GM18951 (cell line): ENCODE measurements at regions of chr6 and their contacts with region 1.

Region 1: DNA sequence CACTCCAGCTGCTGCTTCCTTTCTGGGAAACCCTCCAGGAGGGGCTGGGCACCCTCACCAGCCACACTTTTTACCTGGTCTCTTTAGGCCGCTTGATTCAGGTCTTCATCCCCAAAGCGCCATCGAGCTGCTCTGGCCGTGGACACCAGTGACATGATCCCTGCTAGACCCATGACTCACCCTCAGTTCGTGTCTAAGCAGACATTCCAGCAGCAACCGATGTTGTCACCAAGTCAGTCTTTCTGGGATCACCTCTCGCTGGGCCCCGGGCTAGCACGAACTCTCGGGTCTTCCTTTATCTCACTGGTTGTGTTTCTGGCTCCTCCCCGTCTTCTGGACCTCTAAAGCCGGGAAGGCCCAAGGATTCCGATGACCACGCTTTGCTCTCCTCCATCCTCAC is 43.0 kb upstream of the GPR31 start:
- POLR2A ChIP-seq: no peak

Region 2: DNA sequence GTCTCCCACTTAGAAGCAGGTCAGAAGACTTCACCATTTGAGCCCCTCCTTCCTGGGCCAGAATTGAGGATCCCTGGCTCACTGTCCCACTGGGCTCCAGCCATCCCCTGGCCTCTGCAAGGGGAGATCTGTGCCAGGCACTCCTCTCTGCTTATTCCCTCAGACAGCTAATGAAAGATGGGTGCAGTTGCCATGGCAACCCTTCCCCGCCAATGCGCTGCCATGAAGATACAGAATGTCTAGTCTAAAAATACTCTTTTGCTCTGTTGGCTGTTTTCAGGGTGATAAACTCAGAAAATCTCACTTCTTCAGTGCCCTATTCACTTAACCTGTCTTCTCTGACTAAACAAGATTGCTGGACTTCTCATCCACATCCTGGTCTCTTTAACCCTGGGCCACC is 110.5 kb after region 1 on chr6:
- in situ Hi-C with region 1: loop called (anchors 10 kb)
- POLR2A ChIP-seq: no peak

Region 3: DNA sequence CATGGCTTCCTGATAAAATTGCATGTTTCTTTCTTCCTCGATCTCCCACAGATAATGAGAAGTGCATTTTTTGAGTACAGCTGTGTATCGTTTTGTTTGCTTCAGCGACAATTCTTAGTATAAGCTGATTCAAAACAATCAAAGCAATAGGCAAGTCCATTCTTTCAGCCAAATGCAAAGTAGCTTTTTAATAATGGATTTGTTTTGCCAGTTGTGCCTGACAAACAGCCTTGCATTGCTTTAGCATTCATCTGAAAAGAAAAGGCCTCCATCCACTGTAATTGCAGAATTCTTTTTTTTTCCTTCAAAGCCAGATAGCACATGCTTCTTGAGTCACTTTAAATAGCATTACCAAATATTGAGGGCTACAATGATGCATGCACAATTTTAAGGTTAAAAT is 156.1 kb after region 1 on chr6:
- in situ Hi-C with region 1: loop called (anchors 10 kb)
- POLR2A ChIP-seq: no peak